ENCODE measurements at regions of chr1 and their contacts with region 1.

Region 1: GRCh38 chr1:23367791-23368561 is 1.7 kb downstream of the ZNF436 start:
- DNase-seq: peak; percentile 99
- ATAC-seq: peak; percentile 92 to 95 (median 94)
- H3K4me3 ChIP-seq: peak overlapping the region; percentile 66 to 100 (median 87)
- H3K27ac ChIP-seq: peak overlapping the region; percentile 94 to 100 (median 98)
- H3K4me1 ChIP-seq: peaks cover 17 to 50% (median 40%) of the 10 kb centered on the region in 12 donors
- H3K27me3 ChIP-seq: no peaks in the 10 kb centered on the region
- CTCF ChIP-seq: peak in 5 of 12 donors; percentile 13 to 44 (median 29)
- POLR2A ChIP-seq: peak in 1 of 2 donors; percentile 78

Region 2: GRCh38 chr1:23013657-23014056 is 354.3 kb before region 1 on chr1:
- intact Hi-C with region 1: no loop called
- DNase-seq: no peak
- ATAC-seq: no peak
- H3K4me3 ChIP-seq: no peak overlapping the region
- H3K27ac ChIP-seq: no peak overlapping the region
- H3K4me1 ChIP-seq: peaks cover 0 to 4% (median 0%) of the 10 kb centered on the region in 12 donors
- H3K27me3 ChIP-seq: no peaks in the 10 kb centered on the region
- CTCF ChIP-seq: no peak
- POLR2A ChIP-seq: no peak

Region 3: GRCh38 chr1:23184212-23184934 is 183.6 kb before region 1 on chr1:
- intact Hi-C with region 1: no loop called
- DNase-seq: peak in 1 of 5 donors; percentile 23
- ATAC-seq: peak; percentile 18 to 42 (median 22)
- H3K4me3 ChIP-seq: peak overlapping the region in 9 of 12 donors; percentile 37 to 58 (median 44)
- H3K27ac ChIP-seq: no peak overlapping the region
- H3K4me1 ChIP-seq: peaks cover 0 to 8% (median 5%) of the 10 kb centered on the region in 12 donors
- H3K27me3 ChIP-seq: no peaks in the 10 kb centered on the region
- CTCF ChIP-seq: peak; percentile 57 to 93 (median 86)
- POLR2A ChIP-seq: no peak

Region 4: GRCh38 chr1:23354245-23354644 is 13.7 kb before region 1 on chr1:
- intact Hi-C with region 1: no loop called
- DNase-seq: no peak
- ATAC-seq: no peak
- H3K4me3 ChIP-seq: no peak overlapping the region
- H3K27ac ChIP-seq: no peak overlapping the region
- H3K4me1 ChIP-seq: peaks cover 0 to 14% (median 0%) of the 10 kb centered on the region in 12 donors
- H3K27me3 ChIP-seq: no peaks in the 10 kb centered on the region
- CTCF ChIP-seq: no peak
- POLR2A ChIP-seq: no peak

Region 5: GRCh38 chr1:23394684-23395083 is 26.7 kb after region 1 on chr1:
- intact Hi-C with region 1: loop called in 2 of 10 experiments (anchors 2 kb)
- DNase-seq: peak; percentile 81 to 90 (median 85)
- ATAC-seq: peak; percentile 69 to 87 (median 86)
- H3K4me3 ChIP-seq: peak overlapping the region in 1 of 12 donors; percentile 6
- H3K27ac ChIP-seq: peak overlapping the region in 11 of 12 donors; percentile 50 to 86 (median 76)
- H3K4me1 ChIP-seq: peaks cover 4 to 35% (median 22%) of the 10 kb centered on the region in 12 donors
- H3K27me3 ChIP-seq: no peaks in the 10 kb centered on the region
- CTCF ChIP-seq: peak in 2 of 12 donors; percentile 11 to 23
- POLR2A ChIP-seq: no peak

Region 6: GRCh38 chr1:23403735-23404486 is 35.9 kb after region 1 on chr1:
- intact Hi-C with region 1: loop called in 8 of 10 experiments (anchors 1 to 5 kb)
- DNase-seq: peak; percentile 86 to 90 (median 90)
- ATAC-seq: peak; percentile 85 to 94 (median 88)
- H3K4me3 ChIP-seq: peak overlapping the region in 7 of 12 donors; percentile 1 to 28 (median 8)
- H3K27ac ChIP-seq: peak overlapping the region in 11 of 12 donors; percentile 32 to 76 (median 56)
- H3K4me1 ChIP-seq: peaks cover 5 to 60% (median 34%) of the 10 kb centered on the region in 12 donors
- H3K27me3 ChIP-seq: no peaks in the 10 kb centered on the region
- CTCF ChIP-seq: peak; percentile 88 to 99 (median 95)
- POLR2A ChIP-seq: no peak

Region 7: DNA sequence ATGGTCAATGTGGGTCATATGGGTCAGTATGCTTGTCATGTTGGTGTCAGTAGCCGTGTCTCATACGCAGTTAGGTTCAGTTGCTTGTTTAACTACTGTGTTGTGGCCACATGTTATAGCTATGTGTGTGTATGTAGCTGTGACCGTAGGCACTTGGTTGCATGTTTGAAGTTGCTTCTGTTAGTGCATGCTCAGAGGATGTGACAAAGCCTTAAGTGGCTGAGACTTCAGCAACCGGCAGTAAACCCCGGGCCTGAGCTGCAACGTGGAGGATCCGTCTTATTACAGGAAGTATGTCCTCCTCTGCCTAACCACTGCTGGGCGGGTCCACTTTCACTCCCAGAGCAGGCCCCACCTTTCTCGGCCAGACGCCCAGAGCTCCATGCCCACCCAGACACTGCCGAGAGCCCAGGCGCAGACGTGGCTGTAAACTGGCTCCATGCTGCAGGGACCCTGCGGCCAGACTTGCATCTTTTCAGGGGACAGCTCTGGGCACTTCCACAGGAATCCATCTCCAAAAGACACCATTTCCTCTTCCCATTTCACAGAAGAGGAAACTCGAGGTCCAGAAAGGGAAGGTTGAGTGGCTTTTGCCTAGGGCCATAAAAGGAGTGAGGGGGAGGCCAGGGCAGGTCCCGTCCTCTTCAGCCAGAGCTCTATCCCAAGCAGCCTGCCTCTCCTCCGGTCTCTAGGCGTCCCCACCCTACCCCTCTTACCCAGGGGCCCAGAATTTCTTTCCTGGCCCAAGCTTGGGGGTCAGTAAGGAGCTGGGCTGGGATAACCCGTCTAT is 54.5 kb after region 1 on chr1:
- intact Hi-C with region 1: no loop called
- DNase-seq: peak; percentile 74 to 84 (median 82)
- ATAC-seq: peak; percentile 53 to 70 (median 56)
- H3K4me3 ChIP-seq: peak overlapping the region in 8 of 12 donors; percentile 5 to 80 (median 22)
- H3K27ac ChIP-seq: peak overlapping the region in 11 of 12 donors; percentile 71 to 95 (median 85)
- H3K4me1 ChIP-seq: peaks cover 0 to 59% (median 36%) of the 10 kb centered on the region in 12 donors
- H3K27me3 ChIP-seq: peaks cover 0 to 16% (median 0%) of the 10 kb centered on the region in 9 donors
- CTCF ChIP-seq: no peak
- POLR2A ChIP-seq: no peak

Region 8: DNA sequence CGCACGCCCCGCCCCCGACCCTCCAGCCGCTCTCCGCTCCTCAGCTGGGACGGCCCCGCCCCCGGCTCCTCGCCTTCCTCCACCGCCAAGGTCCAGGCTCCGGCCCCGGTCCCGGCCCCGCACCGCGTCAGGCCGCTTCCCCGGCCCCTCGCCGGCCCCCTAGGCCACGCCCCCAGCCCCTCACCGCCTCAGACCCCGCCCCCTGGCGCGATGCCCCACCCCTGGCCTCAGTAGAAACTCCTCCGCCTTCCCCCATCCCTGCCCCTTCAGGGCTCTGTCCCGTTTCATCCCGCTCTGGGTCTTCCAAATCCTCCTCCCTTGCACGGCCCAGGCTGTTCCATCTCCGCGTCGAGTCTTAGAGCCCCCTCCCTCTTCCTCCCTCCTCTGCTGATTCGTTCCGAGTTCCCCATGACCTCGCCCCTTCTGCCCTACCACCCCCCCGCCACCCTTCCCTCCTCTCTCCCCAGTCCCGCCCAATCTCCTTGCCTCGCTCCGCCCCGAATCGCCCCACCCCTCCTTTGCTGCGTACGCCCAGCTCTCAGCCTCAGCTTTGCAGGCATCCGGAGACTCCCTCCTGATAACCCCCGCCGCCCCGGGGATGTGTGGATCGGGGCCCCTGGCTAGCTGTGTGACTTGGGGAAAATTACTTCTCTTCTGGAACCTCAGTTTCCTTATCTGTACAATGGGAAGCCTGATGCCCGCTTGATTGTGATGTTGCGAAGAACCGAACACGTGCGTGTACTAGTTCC is 116.5 kb after region 1 on chr1:
- intact Hi-C with region 1: loop called in 2 of 10 experiments (anchors 1 to 10 kb)
- DNase-seq: peak; percentile 94 to 97 (median 96)
- ATAC-seq: peak; percentile 87 to 94 (median 92)
- H3K4me3 ChIP-seq: peak overlapping the region; percentile 81 to 100 (median 94)
- H3K27ac ChIP-seq: peak overlapping the region; percentile 71 to 98 (median 93)
- H3K4me1 ChIP-seq: peaks cover 0 to 45% (median 26%) of the 10 kb centered on the region in 12 donors
- H3K27me3 ChIP-seq: peaks cover 0 to 18% (median 0%) of the 10 kb centered on the region in 9 donors
- CTCF ChIP-seq: no peak
- POLR2A ChIP-seq: peak in 1 of 2 donors; percentile 36